Mammary epithelial cell (primary cell): ENCODE measurements at regions of chr9 and their contacts with region 1.

Region 1: DNA sequence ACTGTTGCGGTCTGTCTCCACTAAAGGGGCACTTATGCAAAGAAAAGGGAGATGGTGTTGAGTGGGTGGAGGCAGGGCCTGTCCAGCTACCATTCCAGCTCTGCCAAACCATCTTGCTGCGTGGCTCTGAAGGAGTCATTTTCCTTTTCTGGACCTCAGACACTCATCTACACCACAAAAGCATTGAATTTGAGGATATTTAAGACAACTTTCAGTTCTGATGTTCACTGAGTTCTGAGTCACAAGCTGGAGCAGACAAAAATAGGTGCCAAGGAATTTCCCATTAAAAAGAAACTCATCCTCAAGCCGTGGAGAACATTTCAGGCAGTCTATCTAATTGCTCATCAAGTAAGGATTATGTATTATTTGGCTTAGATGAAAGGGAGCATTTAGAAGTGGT is 195.0 kb upstream of the TBC1D2 start:
- DNase-seq: peak; percentile 57
- H3K4me3 ChIP-seq: no peak overlapping the region
- H3K27ac ChIP-seq: no peak overlapping the region
- H3K4me1 ChIP-seq: peaks cover 17% of the 10 kb centered on the region
- H3K27me3 ChIP-seq: no peaks in the 10 kb centered on the region
- CTCF ChIP-seq: no peak

Region 2: DNA sequence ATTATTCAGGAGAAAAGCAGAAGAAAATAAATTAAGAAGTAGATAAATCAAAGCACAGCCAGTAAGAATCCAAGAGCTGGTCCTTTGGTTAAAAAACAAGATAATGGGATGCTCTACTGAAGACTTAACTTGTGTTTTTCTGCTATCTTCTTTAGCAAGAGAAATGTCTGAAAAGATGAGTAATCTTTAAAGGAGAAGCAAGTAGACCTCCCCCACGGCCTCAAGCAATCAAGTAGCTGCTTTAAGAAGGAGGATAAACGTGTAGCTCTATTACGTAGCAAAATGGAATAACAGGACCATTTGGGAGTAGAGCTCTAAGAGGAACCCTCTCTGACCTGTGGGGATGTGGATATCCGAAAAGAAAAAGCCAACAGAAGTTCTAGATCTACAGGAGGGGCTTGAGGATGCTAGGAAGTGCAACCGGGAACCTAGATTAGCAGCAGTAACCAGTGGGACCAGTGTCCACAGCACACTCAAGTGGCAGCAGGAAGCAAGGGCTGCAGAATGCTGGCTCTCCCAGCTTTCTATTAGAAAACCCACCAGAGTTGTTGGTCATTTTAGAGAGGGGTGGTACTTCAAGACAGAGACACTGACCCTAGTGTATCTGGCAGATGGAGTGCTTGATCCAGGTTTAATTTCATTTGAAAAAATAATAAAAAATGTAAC is 72.9 kb after region 1 on chr9:
- CTCF ChIA-PET with region 1: no interaction called
- dilution Hi-C with region 1: no loop called
- in situ Hi-C with region 1: no loop called
- intact Hi-C with region 1: loop called (anchors 5 kb)
- DNase-seq: peak; percentile 16
- H3K4me3 ChIP-seq: no peak overlapping the region
- H3K27ac ChIP-seq: no peak overlapping the region
- H3K4me1 ChIP-seq: no peaks in the 10 kb centered on the region
- H3K27me3 ChIP-seq: peaks cover 2% of the 10 kb centered on the region
- CTCF ChIP-seq: peak; percentile 43 to 64